WTC11 (cell line): ENCODE measurements at regions of chr1 and their contacts with region 1.

Region 1: GRCh38 chr1:30379684-30380624 is 343.4 kb downstream of the MATN1 start:
- DNase-seq: peak; percentile 50
- ATAC-seq: peak; percentile 85
- H3K4me3 Mint-ChIP-seq: no peak overlapping the region
- H3K27ac Mint-ChIP-seq: no peak overlapping the region
- H3K4me1 Mint-ChIP-seq: no peaks in the 10 kb centered on the region
- H3K27me3 Mint-ChIP-seq: no peaks in the 10 kb centered on the region; the same call in 1 of the 2 replicates
- CTCF ChIP-seq: peak; percentile 66

Region 2: GRCh38 chr1:29793101-29793546 is 586.8 kb before region 1 on chr1:
- CTCF ChIA-PET with region 1: interaction called, 10 read pairs
- POLR2A ChIA-PET with region 1: no interaction called
- DNase-seq: peak; percentile 96
- ATAC-seq: peak; percentile 91
- H3K4me3 Mint-ChIP-seq: no peak overlapping the region
- H3K27ac Mint-ChIP-seq: no peak overlapping the region; the same call in 1 of the 2 replicates
- H3K4me1 Mint-ChIP-seq: peaks cover 4% of the 10 kb centered on the region; the same call in 1 of the 2 replicates
- H3K27me3 Mint-ChIP-seq: no peaks in the 10 kb centered on the region; the same call in 1 of the 2 replicates
- CTCF ChIP-seq: peak; percentile 63

Region 3: GRCh38 chr1:30253807-30254440 is 126.0 kb before region 1 on chr1:
- CTCF ChIA-PET with region 1: interaction called, 10 read pairs
- POLR2A ChIA-PET with region 1: no interaction called
- DNase-seq: peak; percentile 33
- ATAC-seq: peak; percentile 77
- H3K4me3 Mint-ChIP-seq: no peak overlapping the region
- H3K27ac Mint-ChIP-seq: no peak overlapping the region
- H3K4me1 Mint-ChIP-seq: peaks cover 7% of the 10 kb centered on the region
- H3K27me3 Mint-ChIP-seq: no peaks in the 10 kb centered on the region
- CTCF ChIP-seq: no peak

Region 4: DNA sequence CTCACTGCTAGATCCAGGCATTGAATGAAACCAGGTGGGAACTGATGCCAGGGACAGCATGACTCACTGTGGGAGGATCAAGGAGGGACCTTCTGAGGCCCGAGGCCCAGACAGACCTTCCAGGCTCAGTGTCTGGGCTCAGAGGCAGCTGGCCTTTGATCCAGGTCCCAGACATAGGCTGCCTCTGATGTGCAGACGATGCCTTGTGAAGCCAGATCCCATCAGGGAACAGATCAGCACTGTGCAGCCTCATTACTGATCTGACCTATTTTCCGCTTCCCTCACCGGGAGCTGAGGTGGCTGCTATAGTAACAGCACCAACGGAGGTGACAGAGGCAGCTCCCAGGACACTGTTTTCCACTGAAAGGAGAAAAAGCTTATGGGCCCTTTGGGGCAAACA is 56.1 kb before region 1 on chr1:
- CTCF ChIA-PET with region 1: interaction called, 14 read pairs
- POLR2A ChIA-PET with region 1: no interaction called
- DNase-seq: no peak
- ATAC-seq: no peak
- H3K4me3 Mint-ChIP-seq: no peak overlapping the region
- H3K27ac Mint-ChIP-seq: no peak overlapping the region
- H3K4me1 Mint-ChIP-seq: no peaks in the 10 kb centered on the region
- H3K27me3 Mint-ChIP-seq: no peaks in the 10 kb centered on the region
- CTCF ChIP-seq: no peak

Region 5: GRCh38 chr1:30353637-30354036 is 26.3 kb before region 1 on chr1:
- CTCF ChIA-PET with region 1: interaction called, 37 read pairs
- POLR2A ChIA-PET with region 1: no interaction called
- DNase-seq: no peak
- ATAC-seq: peak; percentile 91
- H3K4me3 Mint-ChIP-seq: no peak overlapping the region
- H3K27ac Mint-ChIP-seq: no peak overlapping the region
- H3K4me1 Mint-ChIP-seq: peaks cover 7% of the 10 kb centered on the region
- H3K27me3 Mint-ChIP-seq: no peaks in the 10 kb centered on the region
- CTCF ChIP-seq: no peak

Region 6: DNA sequence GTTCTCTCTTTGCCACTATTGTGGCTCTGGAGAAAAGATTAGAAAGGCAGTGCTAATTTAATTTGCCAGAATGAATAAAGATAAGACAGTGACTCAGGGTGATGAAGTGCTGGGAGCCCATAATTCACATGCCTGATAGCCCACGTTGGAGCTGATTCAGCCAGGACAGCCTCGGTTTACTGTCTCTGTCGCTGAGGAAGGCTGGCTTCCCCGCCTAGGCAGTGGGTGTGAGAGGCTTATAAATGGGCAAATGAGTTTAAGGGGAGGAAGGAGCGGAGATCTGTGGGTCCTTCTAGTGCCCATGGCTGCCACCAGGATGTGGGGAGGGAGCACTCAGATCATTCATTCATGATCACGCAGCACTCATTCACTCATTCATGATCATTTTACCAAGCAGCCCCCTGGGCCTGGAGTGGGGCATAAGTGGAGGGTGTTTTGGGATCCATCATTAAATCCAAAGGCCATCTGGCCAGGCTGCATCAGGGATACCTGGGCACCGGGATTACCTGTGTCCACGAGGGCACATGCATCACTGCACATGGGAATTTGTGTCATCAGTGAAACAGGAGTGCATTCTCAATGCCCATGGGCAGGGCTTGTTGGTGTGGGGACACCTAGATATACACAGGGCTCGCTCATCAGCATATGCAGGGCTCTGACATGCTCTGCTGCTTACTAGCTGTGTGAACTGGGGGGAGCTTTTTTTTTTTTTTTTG is 28.1 kb after region 1 on chr1:
- CTCF ChIA-PET with region 1: interaction called, 18 read pairs
- POLR2A ChIA-PET with region 1: no interaction called
- DNase-seq: no peak
- ATAC-seq: no peak
- H3K4me3 Mint-ChIP-seq: no peak overlapping the region
- H3K27ac Mint-ChIP-seq: no peak overlapping the region
- H3K4me1 Mint-ChIP-seq: peaks cover 9% of the 10 kb centered on the region
- H3K27me3 Mint-ChIP-seq: no peaks in the 10 kb centered on the region; the same call in 1 of the 2 replicates
- CTCF ChIP-seq: no peak

Region 7: DNA sequence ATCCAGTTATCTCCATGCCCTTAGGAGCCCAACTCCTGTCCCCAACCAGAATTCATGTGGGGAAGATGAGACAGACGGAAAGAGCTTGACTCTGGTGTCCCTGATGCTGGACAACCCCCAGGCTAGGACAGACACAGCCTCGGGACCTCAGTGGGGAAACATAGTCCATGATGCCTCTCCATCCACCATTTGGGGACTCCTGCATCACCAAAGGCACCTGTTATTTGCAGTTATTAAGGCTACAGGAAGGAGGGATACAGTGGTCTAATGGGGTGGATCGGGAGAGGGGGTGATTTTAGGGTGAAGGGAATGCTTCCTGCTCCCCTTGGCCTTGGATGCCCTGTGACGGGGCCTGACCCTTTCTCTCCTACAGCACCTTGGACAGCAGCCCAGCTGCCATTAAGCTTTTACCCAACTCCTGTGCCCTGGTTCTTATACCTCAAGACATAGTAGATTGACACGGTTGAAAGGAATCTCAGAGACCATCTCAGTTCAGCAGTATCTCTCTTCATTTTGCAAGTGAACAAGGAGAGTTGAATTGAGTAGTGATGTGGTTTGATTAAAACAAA is 231.9 kb after region 1 on chr1:
- CTCF ChIA-PET with region 1: no interaction called
- POLR2A ChIA-PET with region 1: no interaction called
- DNase-seq: peak; percentile 26
- ATAC-seq: no peak
- H3K4me3 Mint-ChIP-seq: no peak overlapping the region
- H3K27ac Mint-ChIP-seq: no peak overlapping the region
- H3K4me1 Mint-ChIP-seq: no peaks in the 10 kb centered on the region
- H3K27me3 Mint-ChIP-seq: no peaks in the 10 kb centered on the region
- CTCF ChIP-seq: no peak

Region 8: DNA sequence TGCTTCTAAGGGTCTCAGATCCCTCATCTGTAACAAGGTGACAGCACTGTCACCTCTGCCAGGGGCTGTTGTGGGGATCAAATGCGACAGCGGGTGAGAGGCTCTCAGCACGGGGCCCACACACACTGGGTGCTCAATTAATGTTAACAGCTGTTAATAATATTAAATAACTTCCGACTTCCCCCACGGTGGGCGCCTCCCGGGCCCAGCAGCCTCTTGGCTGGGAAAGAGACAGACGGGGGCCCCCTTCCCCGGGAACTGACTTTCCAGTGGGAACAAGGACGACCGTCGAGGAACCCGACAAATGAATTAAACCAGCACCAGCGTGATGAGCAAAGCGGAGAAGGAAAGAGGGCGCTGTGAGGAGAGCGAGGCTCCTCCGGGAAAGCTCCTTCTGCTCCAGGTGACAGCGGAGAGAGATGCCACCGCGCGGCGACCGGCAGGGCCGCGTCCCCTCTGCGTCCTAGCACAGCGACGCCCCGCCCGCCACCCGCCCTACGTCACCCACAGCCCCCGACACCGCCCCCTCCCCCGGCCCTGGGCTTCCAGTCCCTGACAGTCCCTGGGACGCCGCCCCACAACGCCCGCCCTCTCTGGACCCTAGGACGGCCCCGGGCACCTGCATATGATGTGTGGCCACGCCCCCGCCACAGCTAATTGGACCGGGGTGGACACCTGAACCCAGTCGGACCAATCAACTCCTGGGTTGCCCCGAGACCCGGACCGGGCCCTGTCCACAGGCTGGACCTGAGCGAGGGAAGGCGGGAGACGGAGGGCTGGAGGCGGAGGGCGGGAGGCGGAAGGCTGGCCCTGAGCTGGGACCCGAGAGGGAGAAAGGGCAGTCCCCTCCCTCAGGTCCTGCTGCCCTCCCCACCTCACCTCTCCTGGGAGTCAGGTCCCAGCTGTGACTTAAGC is 305.2 kb after region 1 on chr1:
- CTCF ChIA-PET with region 1: interaction called, 28 read pairs
- POLR2A ChIA-PET with region 1: no interaction called
- DNase-seq: peak; percentile 99
- ATAC-seq: peak; percentile 98
- H3K4me3 Mint-ChIP-seq: peak overlapping the region; percentile 71
- H3K27ac Mint-ChIP-seq: no peak overlapping the region
- H3K4me1 Mint-ChIP-seq: peaks cover 24% of the 10 kb centered on the region
- H3K27me3 Mint-ChIP-seq: peaks cover 22% of the 10 kb centered on the region
- CTCF ChIP-seq: no peak